Lower leg skin (tissue), 4 donors: ENCODE measurements at regions of chr2 and their contacts with region 1.

Region 1: GRCh38 chr2:27078267-27079194 is at the start of gene EMILIN1:
- DNase-seq: peak; percentile 80 to 97
- H3K4me3 ChIP-seq: peak within 1 kb of the TSS; percentile 10
- CTCF ChIP-seq: no peak
- POLR2A ChIP-seq: no peak
- total RNA-seq, gene EMILIN1: 3.6 to 17.9 (median 7.9) TPM

Region 2: DNA sequence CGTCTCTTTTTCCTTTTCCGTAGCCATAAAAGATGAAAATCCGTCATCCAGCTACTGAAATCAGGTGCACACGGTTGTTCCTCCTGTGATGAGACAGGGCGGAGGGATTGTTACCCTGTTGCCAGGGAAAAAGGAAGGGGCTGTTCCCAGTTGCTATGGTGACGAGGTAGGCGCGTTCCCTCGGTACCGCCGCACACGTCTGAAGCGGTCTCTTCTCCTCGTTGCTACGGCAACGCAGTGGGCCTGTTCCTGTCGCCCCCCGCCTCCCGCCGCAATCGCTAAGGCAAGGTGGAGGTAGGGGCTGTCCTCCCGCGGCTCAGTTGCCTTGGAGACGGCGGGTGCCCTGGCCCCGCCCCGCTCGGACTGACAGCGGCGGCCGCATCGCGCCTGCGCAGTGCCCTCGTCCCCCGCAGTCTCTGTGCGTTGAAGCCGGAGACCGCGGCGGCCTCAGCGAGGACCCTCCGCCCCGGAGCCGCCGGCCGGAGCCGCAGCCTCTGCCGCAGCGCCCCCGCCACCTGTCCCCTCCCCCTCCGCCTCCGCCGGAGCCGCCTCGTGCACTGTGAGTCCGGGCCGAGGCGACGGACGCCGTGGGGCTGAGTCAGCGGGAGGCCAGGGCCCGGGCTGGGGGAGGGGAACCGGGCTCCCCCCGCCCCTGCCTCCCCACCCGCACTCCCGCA is 108.1 kb before region 1 on chr2 and contains the start of gene MAPRE3:
- intact Hi-C with region 1: loop called (anchors 5 kb)
- DNase-seq: peak; percentile 44 to 94
- H3K4me3 ChIP-seq: peak within 1 kb of the TSS; percentile 49
- CTCF ChIP-seq: no peak
- POLR2A ChIP-seq: no peak
- total RNA-seq, gene MAPRE3: 23.8 to 63.6 (median 35.7) TPM

Region 3: GRCh38 chr2:27890146-27890923 is 811.8 kb after region 1 on chr2 and contains the starts of genes BABAM2 and RBKS:
- intact Hi-C with region 1: no loop called
- DNase-seq: peak; percentile 77 to 96
- H3K4me3 ChIP-seq: peak within 1 kb of the TSS; percentile 66
- CTCF ChIP-seq: peak in 1 of 3 donors; percentile 70
- POLR2A ChIP-seq: peak in 1 of 2 donors; percentile 70
- total RNA-seq, gene BABAM2: 18.4 to 28.5 (median 23.9) TPM
- total RNA-seq, gene RBKS: 0.95 to 2.6 (median 1.3) TPM